RWPE1 (cell line): ENCODE measurements at regions of chr5 and their contacts with region 1.

Region 1: DNA sequence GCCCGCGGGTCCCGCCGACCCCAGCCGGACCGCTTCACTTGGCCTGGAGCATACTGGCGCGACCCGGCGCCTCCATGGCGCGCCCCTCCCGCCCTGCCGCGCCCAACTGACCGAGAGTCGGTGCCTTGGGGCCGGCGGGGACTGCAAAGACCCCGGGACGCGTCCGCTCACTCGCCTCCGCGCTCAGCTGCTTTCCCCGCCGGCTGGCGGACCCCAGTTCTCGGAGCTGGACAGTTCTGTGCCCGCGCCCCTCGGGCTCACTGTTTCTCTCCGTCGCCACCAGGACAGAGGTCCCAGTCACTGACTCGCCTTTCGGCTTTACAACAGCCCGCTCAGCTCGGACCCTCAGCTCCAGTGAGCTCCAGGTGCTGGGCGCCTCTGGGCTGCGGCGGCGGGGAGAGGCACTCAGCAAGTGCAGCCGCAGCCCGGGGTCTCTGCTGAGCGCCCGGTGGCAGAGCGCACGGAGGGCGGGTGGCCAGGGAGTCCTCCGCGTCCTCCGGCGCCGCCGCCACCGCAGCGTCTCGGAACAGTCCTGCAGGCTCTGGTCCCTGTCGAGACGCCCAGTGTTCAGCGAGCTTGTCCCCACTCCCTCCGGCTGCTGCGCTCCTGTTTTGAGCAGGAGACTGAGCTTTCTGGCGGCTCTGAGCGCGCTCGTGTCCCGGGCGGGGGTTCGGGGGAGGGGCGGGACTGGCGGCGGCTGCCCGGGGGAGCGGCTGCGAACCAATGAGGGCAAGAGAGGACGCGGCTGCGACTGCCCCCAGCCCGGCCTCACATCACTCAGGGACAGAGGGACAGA is at the start of gene SMIM32:
- DNase-seq: no peak
- H3K27ac ChIP-seq: no peak within 1 kb of the TSS
- CTCF ChIP-seq: no peak

Region 2: DNA sequence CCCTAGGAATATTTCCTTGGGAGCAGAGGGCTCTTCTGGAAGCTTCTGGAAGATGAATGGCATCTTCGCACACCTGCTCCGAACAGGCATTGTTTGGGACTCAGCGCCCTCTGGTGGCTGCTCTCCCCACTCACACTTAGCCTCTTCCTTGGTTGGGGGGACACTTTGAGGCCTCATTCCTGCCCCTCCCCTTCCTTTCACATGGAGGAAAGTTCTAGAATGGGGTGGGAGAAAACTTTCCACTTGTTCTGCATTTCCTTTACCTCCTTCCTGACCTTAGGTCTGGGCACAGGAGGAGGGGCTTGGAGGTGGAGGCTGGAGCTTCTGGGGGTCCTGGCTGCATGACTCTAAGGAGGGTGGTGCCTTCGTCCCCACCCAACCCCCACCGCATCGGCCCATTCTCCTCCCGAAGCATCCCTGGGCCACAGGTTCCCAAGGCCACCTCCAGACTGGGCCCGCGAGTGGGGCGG is 19.6 kb after region 1 on chr5:
- CTCF ChIA-PET with region 1: interaction called, 11 read pairs
- POLR2A ChIA-PET with region 1: no interaction called
- DNase-seq: peak; percentile 68
- H3K27ac ChIP-seq: no peak overlapping the region
- CTCF ChIP-seq: peak; percentile 91

Region 3: DNA sequence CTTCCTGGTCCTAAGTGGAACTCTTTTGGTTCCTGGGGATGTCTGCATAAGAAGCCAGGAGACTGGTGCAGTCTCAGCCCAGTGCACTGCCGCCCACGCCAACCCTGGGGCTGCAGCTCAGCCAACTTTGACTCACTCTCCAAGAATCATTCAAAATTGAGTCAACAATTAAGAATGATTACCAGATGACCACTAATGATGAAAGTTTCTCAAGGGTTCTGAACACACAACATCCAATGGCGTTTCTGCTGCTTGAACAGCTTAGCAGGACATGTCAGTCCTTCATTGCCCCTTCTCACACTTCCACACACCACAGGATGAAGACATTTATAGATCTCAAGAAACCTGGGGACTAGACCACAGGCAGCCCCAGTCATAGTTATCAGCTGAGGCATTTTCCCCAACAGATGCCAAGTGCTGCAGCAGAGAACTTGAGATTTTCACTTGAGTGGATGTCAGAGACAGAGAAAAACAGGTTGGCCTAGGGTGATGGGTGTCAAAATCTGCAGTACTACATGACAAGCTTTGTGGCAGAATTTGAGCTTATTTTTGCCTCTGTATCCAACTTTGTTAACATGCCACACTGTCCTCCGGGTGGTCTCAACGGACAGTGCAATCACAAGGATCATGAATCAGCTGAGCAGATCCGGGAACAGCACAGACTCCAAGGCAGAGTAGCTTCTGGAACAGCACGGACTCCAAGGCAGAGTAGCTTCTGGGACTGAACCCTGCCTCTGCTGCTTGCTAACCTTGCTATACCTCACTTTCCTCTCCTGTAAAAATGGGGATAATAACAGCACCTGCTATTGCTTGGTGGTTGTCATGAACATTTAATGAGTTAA is 950.3 kb after region 1 on chr5:
- CTCF ChIA-PET with region 1: no interaction called
- POLR2A ChIA-PET with region 1: interaction called, 11 read pairs
- DNase-seq: peak; percentile 95
- H3K27ac ChIP-seq: peak overlapping the region; percentile 72
- CTCF ChIP-seq: no peak